ENCODE measurements at regions of chr7 and their contacts with region 1.

Region 1: DNA sequence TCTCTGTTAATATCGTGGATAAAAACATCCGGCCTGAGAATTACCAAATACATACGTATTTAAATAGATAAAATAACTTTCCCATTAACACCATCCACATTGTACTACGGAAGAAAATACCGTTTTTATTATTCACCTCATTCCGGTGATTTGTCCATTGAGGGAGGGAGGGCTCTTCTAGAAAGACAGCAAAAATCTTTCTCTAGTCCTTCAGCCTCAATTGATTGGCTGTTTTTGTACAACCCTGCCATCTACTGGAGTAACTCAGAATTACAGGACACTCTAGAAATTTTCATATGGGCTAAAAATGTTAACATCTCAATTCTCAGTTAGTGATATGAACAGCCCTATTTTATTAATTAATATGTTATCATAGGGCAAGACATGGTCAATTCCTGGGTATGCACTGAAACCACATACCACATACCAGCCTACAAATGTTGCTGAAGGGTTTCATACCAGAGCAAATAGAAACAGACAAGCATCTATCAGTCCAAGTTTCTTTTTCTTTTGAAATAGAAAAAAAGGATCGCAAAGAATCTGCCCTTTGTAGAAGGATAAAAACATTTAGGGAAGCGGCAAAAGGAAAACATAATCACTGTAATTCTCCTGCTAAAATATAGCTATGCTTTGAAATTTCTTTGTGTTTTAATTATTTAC is 55.8 kb upstream of the CDCA7L start:
- DNase-seq: no peak
- H3K4me3 ChIP-seq: no peak overlapping the region
- CTCF ChIP-seq: peak in 1 of 3 donors; percentile 26
- POLR2A ChIP-seq: no peak

Region 2: DNA sequence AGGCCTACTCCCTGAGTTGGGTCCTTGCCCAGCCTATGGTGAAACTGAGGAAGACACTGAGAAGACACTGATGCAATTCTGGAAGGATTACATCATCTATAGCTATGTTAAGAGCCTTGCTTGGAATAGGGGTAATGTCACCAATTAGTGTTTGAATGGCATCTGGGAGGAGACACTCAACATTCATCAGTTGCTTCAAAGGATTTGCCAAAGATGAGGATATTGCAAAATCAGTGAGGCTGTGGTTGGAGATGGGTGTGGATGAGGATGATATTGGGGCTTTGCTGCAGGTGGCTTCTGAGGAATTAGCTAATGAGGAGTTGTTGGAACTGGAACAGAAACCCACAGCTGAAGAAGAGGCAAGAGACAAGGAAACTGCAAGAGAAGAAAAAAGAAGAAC is 720.3 kb before region 1 on chr7:
- intact Hi-C with region 1: no loop called
- DNase-seq: no peak
- H3K4me3 ChIP-seq: no peak overlapping the region
- CTCF ChIP-seq: no peak
- POLR2A ChIP-seq: no peak

Region 3: GRCh38 chr7:21603972-21604749 is 397.3 kb before region 1 on chr7:
- intact Hi-C with region 1: no loop called
- DNase-seq: no peak
- H3K4me3 ChIP-seq: no peak overlapping the region
- CTCF ChIP-seq: no peak
- POLR2A ChIP-seq: no peak

Region 4: DNA sequence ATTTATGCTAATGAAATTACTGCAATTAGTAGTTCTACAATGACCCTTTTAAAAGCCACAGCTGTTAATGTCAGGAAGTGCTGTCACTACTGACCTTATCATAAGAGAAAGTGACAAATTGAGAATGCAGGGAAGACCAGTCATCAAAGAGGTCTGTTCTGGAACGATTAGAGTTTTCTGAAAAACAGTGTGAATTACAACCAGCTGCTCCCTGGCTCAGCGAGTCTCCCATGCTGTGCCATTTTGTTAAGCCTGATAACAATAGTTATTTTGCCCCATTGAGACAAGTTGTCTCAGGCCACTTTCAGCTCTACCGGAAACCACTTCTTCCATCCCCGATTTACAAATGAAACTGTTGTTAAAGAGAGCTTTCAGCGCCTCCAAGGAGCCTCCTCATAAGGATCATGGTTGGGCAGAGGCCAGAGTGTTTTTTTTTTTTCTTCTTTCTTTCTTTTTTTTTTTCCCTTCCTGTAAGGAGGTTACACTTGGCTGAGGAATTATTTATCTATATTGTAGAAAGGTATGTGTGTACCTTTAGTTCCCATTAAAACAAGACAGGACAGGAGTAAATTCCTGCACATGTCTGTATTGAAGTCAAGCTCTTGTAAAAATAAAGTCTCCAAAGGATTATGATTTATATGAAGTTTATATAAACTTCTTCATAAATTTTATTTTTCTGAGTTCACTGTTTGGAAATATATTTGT is 229.4 kb before region 1 on chr7:
- intact Hi-C with region 1: loop called (anchors 10 kb)
- DNase-seq: no peak
- H3K4me3 ChIP-seq: no peak overlapping the region
- CTCF ChIP-seq: no peak
- POLR2A ChIP-seq: no peak

Region 5: DNA sequence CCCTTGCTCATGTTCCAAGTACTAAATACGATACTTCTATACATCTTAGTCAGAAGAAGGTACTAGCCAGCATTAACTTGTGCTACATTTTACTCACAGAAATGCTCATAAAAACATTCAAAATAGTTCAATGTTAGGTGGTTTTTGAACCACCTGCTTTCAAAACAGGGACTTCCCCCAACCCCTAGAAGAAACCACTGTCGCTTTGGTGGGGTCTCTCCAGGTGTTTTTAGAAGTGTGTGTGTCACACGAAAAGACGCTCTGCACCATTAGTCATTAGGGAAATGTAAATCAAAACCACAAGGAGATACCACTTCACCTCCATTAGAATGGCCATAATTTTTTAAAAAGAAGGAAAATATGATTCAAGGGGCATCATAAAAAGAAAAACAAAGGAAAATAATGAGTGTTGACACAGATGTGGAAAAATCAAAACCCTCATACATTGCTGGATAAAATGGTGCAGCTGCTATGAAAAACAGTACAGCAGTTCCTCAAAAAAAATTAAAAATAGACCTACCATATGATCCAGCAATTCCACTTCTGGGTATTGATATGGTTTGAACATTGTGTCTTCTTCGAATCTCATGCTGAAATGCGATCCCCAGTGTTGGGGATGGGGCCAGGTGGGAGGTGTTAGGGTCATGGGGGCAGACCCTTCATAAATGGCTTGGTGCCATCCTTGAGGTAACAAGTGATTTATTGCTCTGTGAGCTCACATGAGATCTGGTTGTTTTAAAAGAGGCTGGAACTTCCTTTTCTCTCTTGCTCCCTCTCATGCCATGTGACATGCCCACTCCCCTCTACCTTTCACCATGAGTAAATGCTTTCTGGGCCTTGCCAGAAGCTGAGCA is 1371.9 kb after region 1 on chr7:
- intact Hi-C with region 1: no loop called
- DNase-seq: no peak
- H3K4me3 ChIP-seq: no peak overlapping the region
- CTCF ChIP-seq: no peak
- POLR2A ChIP-seq: no peak